Activated naive CD4-positive, alpha-beta T cell treated with anti-CD3 and anti-CD28 coated beads for 36 hours (primary cell): ENCODE measurements at regions of chr12 and their contacts with region 1.

Region 1: DNA sequence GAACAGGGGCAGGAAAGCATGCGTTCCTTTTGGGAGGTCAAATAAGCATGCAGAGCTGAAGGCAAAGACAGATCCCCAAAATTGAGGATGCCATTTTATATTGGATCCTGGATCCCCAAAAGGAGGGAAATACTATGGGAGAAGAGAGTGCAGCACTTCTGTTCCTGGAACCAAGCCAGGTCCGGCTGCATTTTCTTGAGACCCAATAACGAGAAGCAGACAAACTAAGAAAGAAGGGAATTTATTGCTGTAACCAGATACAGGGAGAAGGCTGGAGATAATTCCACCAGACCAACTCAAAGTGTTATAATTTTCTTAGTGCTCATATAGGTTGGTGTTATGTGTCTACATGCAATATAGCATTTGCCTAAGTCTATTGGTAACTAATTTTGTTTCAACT is 60.8 kb downstream of the PDE6H start:
- DNase-seq: no peak
- H3K4me3 Mint-ChIP-seq: no peak overlapping the region
- H3K27ac Mint-ChIP-seq: no peak overlapping the region
- H3K4me1 Mint-ChIP-seq: no peaks in the 10 kb centered on the region
- H3K27me3 Mint-ChIP-seq: no peaks in the 10 kb centered on the region

Region 2: DNA sequence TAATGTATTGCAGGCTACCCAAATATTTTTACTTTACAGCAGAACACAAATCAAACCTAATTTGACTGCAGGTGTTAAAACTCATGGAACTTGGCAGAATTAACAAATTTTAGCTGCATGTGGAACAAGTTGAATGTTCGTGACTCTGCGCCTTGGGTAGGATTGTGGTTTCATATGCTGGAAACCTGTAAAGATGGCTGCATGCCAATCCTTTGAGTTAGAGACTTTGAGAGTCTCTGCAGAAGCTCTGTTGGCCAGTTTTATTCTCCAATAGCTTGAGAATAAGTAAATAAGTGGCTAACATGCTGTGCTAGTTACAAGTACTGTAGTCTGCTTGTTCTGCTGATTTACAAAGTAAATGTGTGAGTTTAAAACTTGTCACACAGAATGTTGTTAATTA is 17.0 kb after region 1 on chr12:
- CTCF ChIA-PET with region 1: interaction called, 3 read pairs
- intact Hi-C with region 1: loop called (anchors 2 kb)
- DNase-seq: peak; percentile 21
- H3K4me3 Mint-ChIP-seq: no peak overlapping the region
- H3K27ac Mint-ChIP-seq: no peak overlapping the region
- H3K4me1 Mint-ChIP-seq: peaks cover 9% of the 10 kb centered on the region
- H3K27me3 Mint-ChIP-seq: no peaks in the 10 kb centered on the region